ENCODE measurements at regions of chr14 and their contacts with region 1.

Region 1: GRCh38 chr14:92951912-92952471 is 29.0 kb downstream of the CHGA start:
- DNase-seq: peak; percentile 70
- H3K4me3 ChIP-seq: no peak overlapping the region
- H3K27ac ChIP-seq: no peak overlapping the region
- H3K4me1 ChIP-seq: no peaks in the 10 kb centered on the region
- H3K27me3 ChIP-seq: no peaks in the 10 kb centered on the region
- CTCF ChIP-seq: peak; percentile 86 to 96
- POLR2A ChIP-seq: no peak

Region 2: DNA sequence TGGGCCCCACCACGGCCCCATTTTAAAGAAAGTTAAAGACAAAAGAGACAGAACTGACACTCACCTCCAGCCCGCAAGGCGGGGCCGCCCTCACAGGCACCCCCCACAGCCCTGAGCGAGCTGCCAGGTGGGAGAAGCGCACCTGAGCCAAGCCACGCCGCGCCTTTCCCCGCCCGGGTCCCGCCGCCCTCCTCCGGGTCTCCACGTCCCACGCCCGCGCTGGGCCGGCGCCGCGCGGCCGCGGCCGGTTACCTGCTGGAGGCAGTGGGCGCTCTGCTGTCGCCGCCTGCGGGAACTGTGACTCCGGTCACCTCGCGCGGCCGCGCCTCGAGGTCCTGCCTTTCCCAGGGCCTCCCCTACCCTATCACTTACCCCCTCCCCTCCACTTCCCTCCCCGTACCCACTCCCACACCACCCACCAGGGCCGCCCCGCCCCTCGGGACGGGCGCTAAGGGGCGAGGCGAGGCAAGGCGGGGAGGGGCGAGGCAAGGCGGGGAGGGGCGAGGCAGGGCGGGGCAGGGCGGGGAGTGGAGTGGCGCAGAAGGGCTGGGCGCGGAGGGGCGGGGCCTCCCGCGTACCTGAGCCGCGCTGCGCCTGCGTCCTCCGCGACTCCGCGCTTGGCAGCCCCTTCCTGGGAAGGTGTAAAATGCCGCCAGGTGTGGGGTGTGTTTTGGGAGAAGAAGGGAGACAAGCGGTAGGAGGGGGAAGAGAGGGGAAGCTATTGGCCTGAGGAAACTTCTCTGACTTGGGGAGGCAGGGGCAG is 1115.7 kb before region 1 on chr14:
- CTCF ChIA-PET with region 1: no interaction called
- POLR2A ChIA-PET with region 1: no interaction called
- dilution Hi-C with region 1: no loop called
- intact Hi-C with region 1: no loop called
- DNase-seq: no peak
- H3K4me3 ChIP-seq: no peak overlapping the region
- H3K27ac ChIP-seq: no peak overlapping the region
- H3K4me1 ChIP-seq: no peaks in the 10 kb centered on the region
- H3K27me3 ChIP-seq: peaks cover 22 to 46% of the 10 kb centered on the region in 2 experiments
- CTCF ChIP-seq: no peak
- POLR2A ChIP-seq: no peak

Region 3: GRCh38 chr14:93132470-93133065 is 180.6 kb after region 1 on chr14:
- CTCF ChIA-PET with region 1: interaction called, 109 read pairs
- POLR2A ChIA-PET with region 1: interaction called, 3 read pairs
- dilution Hi-C with region 1: loop called (anchors 25 kb)
- intact Hi-C with region 1: loop called (anchors 1 kb)
- DNase-seq: peak; percentile 52
- H3K4me3 ChIP-seq: no peak overlapping the region
- H3K27ac ChIP-seq: no peak overlapping the region
- H3K4me1 ChIP-seq: no peaks in the 10 kb centered on the region
- H3K27me3 ChIP-seq: no peaks in the 10 kb centered on the region
- CTCF ChIP-seq: peak; percentile 30 to 65
- POLR2A ChIP-seq: no peak

Region 4: GRCh38 chr14:93173943-93174395 is 222.0 kb after region 1 on chr14:
- CTCF ChIA-PET with region 1: interaction called, 8 read pairs
- POLR2A ChIA-PET with region 1: no interaction called
- dilution Hi-C with region 1: no loop called
- intact Hi-C with region 1: loop called (anchors 1 kb)
- DNase-seq: no peak
- H3K4me3 ChIP-seq: no peak overlapping the region
- H3K27ac ChIP-seq: no peak overlapping the region
- H3K4me1 ChIP-seq: no peaks in the 10 kb centered on the region
- H3K27me3 ChIP-seq: no peaks in the 10 kb centered on the region
- CTCF ChIP-seq: no peak
- POLR2A ChIP-seq: no peak

Region 5: GRCh38 chr14:93219103-93219726 is 267.2 kb after region 1 on chr14:
- CTCF ChIA-PET with region 1: interaction called, 7 read pairs
- POLR2A ChIA-PET with region 1: no interaction called
- dilution Hi-C with region 1: no loop called
- intact Hi-C with region 1: loop called (anchors 1 kb)
- DNase-seq: peak; percentile 59
- H3K4me3 ChIP-seq: no peak overlapping the region
- H3K27ac ChIP-seq: no peak overlapping the region
- H3K4me1 ChIP-seq: no peaks in the 10 kb centered on the region
- H3K27me3 ChIP-seq: no peaks in the 10 kb centered on the region
- CTCF ChIP-seq: peak; percentile 45 to 68
- POLR2A ChIP-seq: no peak

Region 6: DNA sequence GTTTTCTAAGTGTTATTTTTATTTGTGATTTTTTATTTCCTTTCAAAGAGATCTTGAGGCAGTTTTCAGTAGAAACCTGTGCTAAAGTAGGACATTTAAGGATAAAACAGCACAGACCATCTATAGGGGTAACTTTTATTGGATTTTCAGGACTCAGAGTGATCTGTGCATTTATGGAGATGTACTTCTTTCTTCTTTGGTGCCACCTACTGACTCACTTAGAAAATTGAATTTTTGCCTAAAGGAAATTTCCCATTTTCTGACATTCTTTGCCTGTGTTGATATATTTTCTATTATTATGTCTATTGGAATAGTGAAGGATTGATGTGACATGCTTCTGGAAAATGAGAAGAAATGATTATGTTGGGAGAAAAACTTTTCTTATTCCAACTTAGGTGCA is 591.8 kb after region 1 on chr14:
- CTCF ChIA-PET with region 1: no interaction called
- POLR2A ChIA-PET with region 1: no interaction called
- dilution Hi-C with region 1: no loop called
- intact Hi-C with region 1: loop called (anchors 5 kb)
- DNase-seq: peak; percentile 23
- H3K4me3 ChIP-seq: no peak overlapping the region
- H3K27ac ChIP-seq: no peak overlapping the region
- H3K4me1 ChIP-seq: no peaks in the 10 kb centered on the region
- H3K27me3 ChIP-seq: no peaks in the 10 kb centered on the region
- CTCF ChIP-seq: peak; percentile 15 to 18
- POLR2A ChIP-seq: no peak

Region 7: GRCh38 chr14:93619176-93619793 is 667.3 kb after region 1 on chr14:
- CTCF ChIA-PET with region 1: no interaction called
- POLR2A ChIA-PET with region 1: no interaction called
- dilution Hi-C with region 1: no loop called
- intact Hi-C with region 1: loop called (anchors 5 kb)
- DNase-seq: peak; percentile 43
- H3K4me3 ChIP-seq: no peak overlapping the region
- H3K27ac ChIP-seq: no peak overlapping the region
- H3K4me1 ChIP-seq: no peaks in the 10 kb centered on the region
- H3K27me3 ChIP-seq: no peaks in the 10 kb centered on the region
- CTCF ChIP-seq: peak; percentile 31 to 43
- POLR2A ChIP-seq: no peak